GM12878 (cell line): ENCODE measurements at regions of chr20 and their contacts with region 1.

Region 1: GRCh38 chr20:44187051-44187762 is at the start of gene JPH2:
- DNase-seq: no peak
- ATAC-seq: peak; percentile 21; the same call in 2 of the 3 replicates
- H3K4me3 ChIP-seq: no peak within 1 kb of the TSS
- H3K27ac ChIP-seq: no peak within 1 kb of the TSS
- H3K4me1 ChIP-seq: no peaks in the 10 kb centered on the region
- H3K27me3 ChIP-seq: peaks cover 6 to 12% of the 10 kb centered on the region in 2 experiments; a peak in 3 of 4 replicates
- CTCF ChIP-seq: no peak
- EP300 ChIP-seq: no peak
- POLR2A ChIP-seq: no peak
- RAD21 ChIP-seq: no peak
- polyA plus RNA-seq, gene JPH2: not detected

Region 2: DNA sequence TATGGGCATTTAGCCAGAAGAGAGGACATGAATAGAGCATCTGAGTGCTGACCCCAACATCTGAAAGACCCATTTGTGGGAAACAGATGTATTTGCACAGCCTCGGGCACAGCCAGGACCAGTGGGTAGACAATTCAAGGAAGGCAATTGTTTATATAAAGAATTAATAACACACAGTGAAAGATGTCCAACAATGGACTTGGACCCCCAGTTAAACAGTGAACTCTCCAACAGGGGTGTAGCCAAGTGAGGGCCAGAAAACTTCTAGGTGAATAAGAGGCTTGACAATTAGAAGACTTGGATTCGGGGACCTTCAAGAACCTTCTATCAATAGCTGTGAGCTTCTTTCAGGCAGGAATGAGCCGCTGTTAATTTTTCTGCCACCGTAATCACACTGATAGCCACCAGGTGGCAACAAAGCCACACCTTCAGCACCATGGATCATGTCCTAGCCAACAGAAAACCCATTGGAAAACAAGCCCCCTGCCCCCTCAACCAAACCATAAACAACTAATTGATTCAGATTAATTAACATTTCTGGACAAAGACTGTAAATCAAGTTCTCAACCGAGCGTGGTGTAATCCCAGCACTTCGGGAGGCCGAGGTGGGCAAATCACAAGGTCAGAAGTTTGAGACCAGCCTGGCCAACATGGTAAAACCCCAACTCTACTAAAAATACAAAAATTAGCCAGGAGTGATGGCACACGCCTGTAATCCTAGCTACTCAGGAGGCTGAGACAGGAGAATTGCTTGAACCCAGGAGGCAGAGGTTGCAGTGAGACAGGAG is 738.3 kb before region 1 on chr20:
- CTCF ChIA-PET with region 1: interaction called, 20 read pairs
- POLR2A ChIA-PET with region 1: no interaction called
- RAD21 ChIA-PET with region 1: interaction called, 11 read pairs
- SMC1A ChIA-PET with region 1: interaction called, 7 read pairs
- in situ Hi-C with region 1: loop called (anchors 5 kb)
- intact Hi-C with region 1: no loop called
- DNase-seq: peak; percentile 13
- ATAC-seq: peak; percentile 89
- H3K4me3 ChIP-seq: no peak overlapping the region
- H3K27ac ChIP-seq: no peak overlapping the region
- H3K4me1 ChIP-seq: no peaks in the 10 kb centered on the region
- H3K27me3 ChIP-seq: no peaks in the 10 kb centered on the region
- CTCF ChIP-seq: peak; percentile 74 to 87 (median 77)
- EP300 ChIP-seq: no peak
- POLR2A ChIP-seq: no peak
- RAD21 ChIP-seq: peak; percentile 90

Region 3: DNA sequence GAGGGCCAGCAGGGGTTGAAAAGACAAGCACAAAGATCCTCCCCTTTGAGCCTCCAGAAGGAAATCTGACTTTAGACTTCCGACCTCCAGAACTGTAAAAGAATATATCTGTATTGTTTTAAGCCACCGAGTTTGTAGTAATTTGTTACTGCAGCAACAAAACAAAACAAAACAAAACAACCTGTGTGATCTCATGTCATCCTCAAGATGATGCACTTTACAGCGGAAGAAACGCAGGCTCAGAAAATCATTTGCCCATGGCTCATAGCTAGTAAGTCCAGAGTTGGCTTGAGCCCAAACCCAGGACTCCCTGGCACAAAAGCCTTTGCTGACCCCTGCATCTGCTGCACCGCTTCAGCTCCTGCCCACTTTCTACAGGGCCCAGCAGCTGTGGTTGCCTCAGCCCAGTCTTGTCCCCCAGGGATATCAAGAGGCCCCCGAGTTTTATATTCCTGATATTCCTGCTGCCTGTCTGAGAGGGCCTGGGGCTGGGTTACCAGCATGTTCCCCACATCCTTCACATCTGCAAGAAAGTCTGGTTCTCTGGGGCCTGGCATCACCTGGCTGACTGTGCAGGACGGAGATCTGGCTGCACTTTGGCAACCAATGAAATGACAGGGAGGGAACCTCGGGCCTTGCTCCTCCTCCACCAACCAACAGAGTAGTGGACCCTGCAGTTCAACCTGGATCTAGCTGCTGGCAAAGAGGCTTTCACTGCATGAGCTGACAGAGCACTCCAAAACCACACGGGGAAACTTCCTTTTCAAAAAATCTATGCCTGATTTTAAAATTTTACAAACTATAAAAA is 57.1 kb before region 1 on chr20:
- CTCF ChIA-PET with region 1: interaction called, 15 read pairs
- POLR2A ChIA-PET with region 1: no interaction called
- RAD21 ChIA-PET with region 1: interaction called, 6 read pairs
- SMC1A ChIA-PET with region 1: interaction called, 3 read pairs
- in situ Hi-C with region 1: no loop called
- intact Hi-C with region 1: no loop called
- DNase-seq: no peak
- ATAC-seq: no peak
- H3K4me3 ChIP-seq: no peak overlapping the region
- H3K27ac ChIP-seq: no peak overlapping the region
- H3K4me1 ChIP-seq: peaks cover 3% of the 10 kb centered on the region; the same call in 1 of the 2 replicates
- H3K27me3 ChIP-seq: 0 out of 4 replicates have a peak, but pooled peaks cover 0 to 1% of the 10 kb centered on the region in 2 experiments
- CTCF ChIP-seq: no peak
- EP300 ChIP-seq: no peak
- POLR2A ChIP-seq: no peak
- RAD21 ChIP-seq: no peak

Region 4: GRCh38 chr20:44166477-44166876 is 20.7 kb before region 1 on chr20:
- CTCF ChIA-PET with region 1: interaction called, 10 read pairs
- POLR2A ChIA-PET with region 1: no interaction called
- RAD21 ChIA-PET with region 1: interaction called, 3 read pairs
- SMC1A ChIA-PET with region 1: interaction called, 5 read pairs
- in situ Hi-C with region 1: no loop called
- intact Hi-C with region 1: no loop called
- DNase-seq: no peak
- ATAC-seq: no peak
- H3K4me3 ChIP-seq: no peak overlapping the region
- H3K27ac ChIP-seq: no peak overlapping the region
- H3K4me1 ChIP-seq: no peaks in the 10 kb centered on the region
- H3K27me3 ChIP-seq: peaks cover 3 to 6% of the 10 kb centered on the region in 2 experiments; a peak in 2 of 4 replicates
- CTCF ChIP-seq: no peak
- EP300 ChIP-seq: no peak
- POLR2A ChIP-seq: no peak
- RAD21 ChIP-seq: no peak

Region 5: DNA sequence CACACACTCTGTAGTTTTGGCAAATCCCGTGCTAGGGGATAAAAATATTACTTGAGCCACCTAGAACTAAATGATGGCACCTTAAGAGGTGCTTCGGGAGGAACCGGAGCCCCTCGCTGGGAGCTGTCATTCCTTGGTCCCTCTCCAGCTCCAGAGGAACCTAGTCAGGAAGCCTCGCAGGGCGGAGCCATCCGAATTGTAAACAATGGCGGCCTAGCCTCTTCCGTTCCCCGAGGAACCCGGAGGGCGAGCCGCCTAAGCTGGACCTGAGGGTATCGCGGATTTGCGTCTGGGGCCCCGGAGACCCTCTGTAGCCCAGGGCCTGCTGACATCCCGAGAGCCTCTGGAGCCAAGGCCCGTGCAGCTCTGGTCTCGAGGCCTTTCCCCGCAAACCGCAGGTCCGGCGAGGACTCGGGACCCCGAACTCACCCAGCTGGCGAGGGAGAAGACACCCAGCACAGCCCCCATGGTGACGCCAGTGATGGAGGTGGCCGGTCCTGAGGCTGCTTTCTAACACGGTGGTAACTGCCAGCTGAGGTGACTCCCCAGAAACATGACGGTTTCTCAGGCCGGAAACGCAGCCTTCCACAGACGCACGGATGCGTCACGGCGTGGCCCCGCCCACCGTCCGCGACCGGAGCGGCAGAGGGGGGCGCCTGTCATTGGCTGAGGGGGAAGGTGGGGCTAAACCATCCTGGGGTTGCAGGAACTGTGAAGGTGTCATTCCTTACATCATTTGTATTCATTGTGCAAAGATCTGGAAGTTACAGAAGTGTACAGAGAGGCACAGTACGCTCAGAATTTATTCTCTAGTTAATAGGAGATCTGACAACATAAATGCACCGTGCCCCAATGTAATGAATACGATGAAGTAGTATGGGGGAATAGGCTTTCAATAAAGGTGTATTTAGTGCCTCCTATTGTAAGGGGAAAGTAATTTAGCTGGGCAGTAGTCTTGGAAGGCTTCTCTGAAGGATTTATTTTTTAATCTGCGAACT is 334.6 kb after region 1 on chr20 and contains the start of gene SERINC3:
- CTCF ChIA-PET with region 1: no interaction called
- POLR2A ChIA-PET with region 1: no interaction called
- RAD21 ChIA-PET with region 1: no interaction called
- SMC1A ChIA-PET with region 1: no interaction called
- in situ Hi-C with region 1: no loop called
- intact Hi-C with region 1: no loop called
- DNase-seq: peak; percentile 78
- ATAC-seq: peak; percentile 98
- H3K4me3 ChIP-seq: peak within 1 kb of the TSS; percentile 94
- H3K27ac ChIP-seq: peak within 1 kb of the TSS; percentile 93
- H3K4me1 ChIP-seq: peaks cover 7% of the 10 kb centered on the region; the same call in 1 of the 2 replicates
- H3K27me3 ChIP-seq: no peaks in the 10 kb centered on the region
- CTCF ChIP-seq: peak in 2 of 3 experiments; percentile 27 to 29; a peak in 3 of 6 replicates
- EP300 ChIP-seq: peak; percentile 23 to 25; a peak in 1 of 4 replicates
- POLR2A ChIP-seq: peak; percentile 95
- RAD21 ChIP-seq: peak; percentile 29; the same call in 1 of the 2 replicates
- polyA plus RNA-seq, gene SERINC3: 37.8 to 55.6 TPM